ENCODE measurements at regions of chr11 and their contacts with region 1.

Region 1: GRCh38 chr11:68257475-68258362 is 14.1 kb downstream of the C11orf24 start:
- DNase-seq: peak; percentile 97
- H3K4me3 ChIP-seq: peak overlapping the region in 1 of 4 donors; percentile 13
- H3K27ac ChIP-seq: peak overlapping the region in 2 of 4 donors; percentile 10 to 52
- H3K4me1 ChIP-seq: peaks cover 7 to 8% (median 8%) of the 10 kb centered on the region in 4 donors
- H3K27me3 ChIP-seq: no peaks in the 10 kb centered on the region
- CTCF ChIP-seq: peak; percentile 88 to 98 (median 91)
- EP300 ChIP-seq: no peak
- POLR2A ChIP-seq: no peak

Region 2: GRCh38 chr11:68181719-68182451 is 75.8 kb before region 1 on chr11:
- in situ Hi-C with region 1: no loop called
- intact Hi-C with region 1: no loop called
- DNase-seq: no peak
- H3K4me3 ChIP-seq: no peak overlapping the region
- H3K27ac ChIP-seq: peak overlapping the region in 2 of 4 donors; percentile 14 to 16
- H3K4me1 ChIP-seq: no peaks in the 10 kb centered on the region
- H3K27me3 ChIP-seq: no peaks in the 10 kb centered on the region
- CTCF ChIP-seq: no peak
- EP300 ChIP-seq: no peak
- POLR2A ChIP-seq: no peak

Region 3: DNA sequence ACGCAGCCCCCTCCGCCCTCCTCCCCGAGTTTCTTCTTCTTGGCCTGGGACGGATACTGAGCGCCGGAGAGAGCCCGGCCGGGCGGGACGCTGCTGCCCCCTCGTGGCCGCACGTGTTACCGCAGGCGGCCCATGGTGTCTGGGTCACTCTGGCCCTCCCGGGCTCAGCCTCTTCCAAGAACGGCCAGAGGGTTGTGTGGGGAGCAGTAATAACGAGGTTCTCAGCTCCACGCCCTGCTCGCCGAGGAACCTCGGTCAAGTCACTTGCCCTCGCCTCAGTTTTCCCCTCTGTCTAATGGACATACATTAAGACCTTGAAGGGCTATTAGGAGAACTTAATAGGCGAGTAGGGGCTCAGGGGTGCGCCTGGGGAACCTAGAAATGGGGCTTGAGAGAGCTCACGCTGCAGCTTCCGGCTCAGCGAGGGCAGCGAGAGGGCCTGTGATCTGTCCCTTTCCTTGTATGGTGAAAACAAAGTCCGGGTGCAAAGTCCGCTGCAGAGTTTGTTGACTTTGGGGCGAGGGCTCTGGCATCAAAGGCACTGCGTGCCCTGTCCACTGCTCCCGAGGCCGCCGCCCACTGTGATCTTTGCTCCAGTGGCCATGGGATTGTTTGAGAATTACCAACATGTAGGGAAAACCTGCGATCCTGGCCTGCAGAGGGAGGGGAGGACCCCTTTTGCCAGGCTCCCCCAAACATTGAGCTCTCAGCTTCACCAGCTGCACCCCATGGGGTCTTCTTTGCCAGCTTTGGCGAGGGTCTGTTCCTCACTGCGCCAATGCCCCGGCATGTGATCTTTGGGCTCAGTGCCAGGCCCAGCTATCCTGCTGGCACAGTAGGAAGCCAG is 40.3 kb after region 1 on chr11:
- in situ Hi-C with region 1: loop called in 3 of 4 experiments (anchors 5 kb)
- intact Hi-C with region 1: loop called (anchors 2 kb)
- DNase-seq: peak; percentile 91
- H3K4me3 ChIP-seq: peak overlapping the region in 1 of 4 donors; percentile 13
- H3K27ac ChIP-seq: peak overlapping the region; percentile 74 to 86 (median 83)
- H3K4me1 ChIP-seq: peaks cover 9 to 40% (median 35%) of the 10 kb centered on the region in 4 donors
- H3K27me3 ChIP-seq: no peaks in the 10 kb centered on the region
- CTCF ChIP-seq: peak; percentile 98 to 99 (median 99)
- EP300 ChIP-seq: peak; percentile 63
- POLR2A ChIP-seq: peak; percentile 34

Region 4: DNA sequence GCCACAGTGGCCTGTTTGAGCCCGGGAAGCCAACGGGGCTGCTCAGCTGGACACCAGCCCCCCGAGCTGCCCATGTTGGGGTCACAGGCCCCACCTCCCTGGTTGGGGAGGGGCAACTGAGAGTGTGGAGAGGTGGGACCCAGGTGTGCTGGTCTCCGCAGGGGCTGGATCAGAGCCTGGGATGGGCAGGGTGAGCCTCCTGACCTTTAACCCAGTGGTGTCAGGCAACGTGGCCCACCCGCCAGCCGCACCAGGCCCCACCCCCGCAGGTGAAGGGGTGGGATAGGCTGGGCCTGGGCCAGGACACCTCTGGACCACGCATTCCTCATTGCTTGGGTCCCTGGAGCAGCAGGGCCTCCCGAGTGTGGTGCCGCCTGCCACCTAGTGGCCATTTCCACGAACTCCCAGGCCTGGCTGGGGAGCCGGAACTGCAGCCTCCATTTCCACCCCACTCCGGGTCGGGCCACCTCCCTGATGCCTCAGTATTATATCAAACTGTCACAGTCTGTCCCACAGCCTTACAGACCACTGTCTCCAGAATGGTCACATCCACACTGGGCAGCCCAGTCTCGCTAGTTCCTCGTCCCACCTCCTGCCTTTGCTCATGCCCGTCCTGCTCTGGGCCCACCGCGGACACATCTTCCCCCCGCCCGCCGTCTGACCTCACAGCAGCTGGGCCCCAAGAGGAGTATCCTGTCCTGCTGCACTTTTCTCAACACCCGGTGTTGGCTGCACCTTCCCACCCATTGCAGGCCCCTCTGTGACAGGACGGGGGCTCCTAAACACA is 189.5 kb after region 1 on chr11:
- in situ Hi-C with region 1: loop called in 1 of 4 experiments (anchors 10 kb)
- intact Hi-C with region 1: loop called (anchors 2 kb)
- DNase-seq: peak; percentile 83
- H3K4me3 ChIP-seq: no peak overlapping the region
- H3K27ac ChIP-seq: no peak overlapping the region
- H3K4me1 ChIP-seq: peaks cover 0 to 6% (median 1%) of the 10 kb centered on the region in 4 donors
- H3K27me3 ChIP-seq: no peaks in the 10 kb centered on the region
- CTCF ChIP-seq: peak; percentile 94 to 97 (median 95)
- EP300 ChIP-seq: no peak
- POLR2A ChIP-seq: no peak

Measured in transverse colon (tissue), 4 donors.